Naive thymus-derived CD4-positive, alpha-beta T cell (primary cell): ENCODE measurements at regions of chr2 and their contacts with region 1.

Region 1: DNA sequence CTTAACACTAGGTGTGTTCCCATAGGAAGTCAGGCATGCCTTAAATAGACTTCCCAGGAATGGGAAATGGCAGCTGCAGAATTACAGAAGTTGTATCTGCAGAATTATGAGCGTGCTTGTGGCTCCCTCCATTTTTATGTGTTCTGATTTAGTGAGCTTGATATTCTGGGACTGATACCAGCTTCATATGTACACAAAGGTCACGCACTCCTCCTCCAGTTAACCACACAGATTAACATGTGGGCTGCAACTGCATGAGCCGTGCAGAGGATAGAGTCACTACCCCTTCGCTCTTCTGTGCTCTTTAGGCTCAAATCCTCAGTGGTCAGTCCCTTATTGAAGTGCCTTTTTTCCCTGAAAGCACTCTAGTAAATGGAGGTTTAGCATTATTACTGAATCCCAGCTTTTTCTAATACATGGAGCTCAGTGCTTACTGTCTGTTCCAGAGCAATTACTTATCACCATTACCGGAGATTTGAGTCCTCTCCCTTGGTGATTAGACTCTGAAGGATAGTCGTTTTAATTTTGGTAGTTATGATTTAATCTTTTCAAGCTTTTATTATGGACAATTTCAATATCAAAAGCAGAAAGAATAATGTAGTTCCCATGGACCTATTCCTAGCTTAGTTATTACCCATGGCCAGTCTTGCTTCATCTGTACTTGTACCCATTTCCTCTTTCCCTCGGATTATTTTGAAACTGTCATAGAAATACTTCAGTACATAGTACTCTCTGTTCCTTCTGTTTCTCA is 238.3 kb downstream of the PRKCE start:
- DNase-seq: no peak
- ATAC-seq: peak; percentile 39
- H3K4me3 ChIP-seq: no peak overlapping the region
- H3K4me3 Mint-ChIP-seq: peak overlapping the region in 7 of 10 donors; percentile 29 to 73 (median 60)
- H3K27ac ChIP-seq: peak overlapping the region; percentile 58
- H3K27ac Mint-ChIP-seq: peak overlapping the region in 8 of 9 donors; percentile 59 to 96 (median 85)
- H3K4me1 ChIP-seq: peaks cover 0 to 40% of the 10 kb centered on the region in 2 donors
- H3K4me1 Mint-ChIP-seq: peaks cover 29 to 58% (median 49%) of the 10 kb centered on the region in 7 donors
- H3K27me3 ChIP-seq: no peaks in the 10 kb centered on the region
- H3K27me3 Mint-ChIP-seq: no peaks in the 10 kb centered on the region

Region 2: DNA sequence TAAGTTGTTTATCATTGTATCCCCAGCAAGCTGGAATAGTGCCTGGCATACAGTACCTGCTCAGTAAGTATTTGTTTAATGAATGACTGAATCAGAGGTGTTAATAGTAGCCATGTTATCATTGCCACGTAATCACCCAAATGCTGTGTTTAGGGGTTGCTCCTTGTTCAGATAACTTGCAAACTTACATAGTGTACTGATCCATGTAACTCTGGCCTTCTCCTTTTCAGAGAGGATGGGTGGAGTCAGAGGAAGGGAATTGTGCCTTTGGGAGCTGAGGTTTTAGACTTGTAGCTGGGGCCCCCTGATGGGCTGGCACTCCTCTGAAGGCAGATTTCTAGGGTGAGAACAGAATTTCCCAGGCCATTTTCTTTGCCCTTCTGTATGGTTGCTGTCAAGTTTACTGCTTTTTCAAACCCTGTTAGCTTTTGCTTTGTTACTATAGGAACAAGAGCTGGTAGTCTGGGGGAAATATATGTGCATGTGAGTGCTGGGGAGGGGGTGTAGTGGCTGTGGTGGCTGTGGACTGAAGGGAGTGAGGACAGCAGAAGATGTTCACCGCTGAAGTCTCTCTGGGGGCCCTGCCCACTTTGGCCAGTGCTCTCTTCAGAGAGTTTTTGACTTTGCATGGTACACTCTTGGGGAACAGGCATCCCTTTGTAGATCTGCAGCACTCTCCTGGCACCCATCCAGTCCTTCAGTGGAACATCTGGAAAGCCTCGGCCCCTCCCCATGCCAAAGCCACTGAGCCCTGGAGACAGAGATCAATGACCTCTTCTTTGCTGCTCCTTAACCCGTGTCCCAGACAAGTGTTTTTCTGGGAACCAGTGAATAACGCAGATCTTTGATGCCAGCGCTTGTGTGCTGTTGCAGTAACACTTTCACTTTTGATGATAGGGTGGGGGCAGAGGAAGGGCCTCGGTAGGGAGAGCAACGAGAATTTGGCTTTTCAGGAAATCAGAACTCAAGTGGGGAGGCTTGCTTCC is 29.4 kb before region 1 on chr2:
- CTCF ChIA-PET with region 1: no interaction called
- POLR2A ChIA-PET with region 1: interaction called, 4 read pairs
- intact Hi-C with region 1: loop called in 1 of 2 experiments (anchors 1 kb)
- DNase-seq: peak in 8 of 9 donors; percentile 26 to 59 (median 46)
- ATAC-seq: peak; percentile 72
- H3K4me3 ChIP-seq: peak overlapping the region; percentile 64
- H3K4me3 Mint-ChIP-seq: peak overlapping the region; percentile 83 to 95 (median 88)
- H3K27ac ChIP-seq: peak overlapping the region; percentile 71
- H3K27ac Mint-ChIP-seq: peak overlapping the region; percentile 86 to 97 (median 92)
- H3K4me1 ChIP-seq: peaks cover 0 to 40% of the 10 kb centered on the region in 2 donors
- H3K4me1 Mint-ChIP-seq: peaks cover 30 to 63% (median 58%) of the 10 kb centered on the region in 7 donors
- H3K27me3 ChIP-seq: no peaks in the 10 kb centered on the region
- H3K27me3 Mint-ChIP-seq: no peaks in the 10 kb centered on the region